Esophagus squamous epithelium (tissue), 5 donors: ENCODE measurements at regions of chr3 and their contacts with region 1.

Region 1: DNA sequence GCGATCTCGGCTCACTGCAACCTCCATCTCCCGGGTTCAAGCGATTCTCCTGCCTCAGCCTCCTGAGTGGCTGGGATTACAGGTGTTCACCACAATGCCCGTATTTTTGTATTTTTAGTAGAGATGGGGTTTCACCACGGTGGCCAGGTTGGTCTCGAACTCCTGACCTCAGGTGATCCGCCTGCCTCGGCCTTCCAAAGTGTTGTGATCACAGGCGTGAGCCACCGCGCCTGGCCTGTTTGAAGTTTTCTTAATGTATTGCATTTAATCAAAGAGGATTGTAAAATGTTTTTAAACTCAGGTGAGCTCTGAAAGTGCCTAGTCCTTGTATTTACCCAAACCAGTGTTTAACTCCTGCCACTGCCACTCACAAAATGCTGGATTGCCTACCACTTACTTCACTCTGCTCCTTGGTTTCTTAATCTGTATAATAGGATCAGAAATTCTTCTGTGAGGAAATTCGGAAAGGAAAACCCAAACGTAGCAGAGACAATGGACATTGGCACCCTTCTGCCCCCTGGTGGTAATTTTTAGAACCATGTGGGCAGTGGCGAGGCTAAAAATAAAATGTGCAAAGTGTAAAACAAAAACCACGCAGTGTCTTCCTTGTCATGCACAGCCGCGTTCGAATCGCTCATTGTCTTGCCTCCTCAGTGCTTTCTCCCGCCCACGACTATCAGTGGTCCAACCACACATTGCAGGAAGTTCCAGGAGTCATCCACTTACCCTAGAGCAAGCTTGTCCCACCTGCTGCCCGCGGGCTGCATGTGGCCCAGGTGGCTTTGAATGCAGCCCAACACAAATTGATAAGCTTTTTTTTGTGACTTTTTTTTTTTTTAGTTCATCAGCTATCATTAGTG is 27.3 kb downstream of the CEP19 start:
- DNase-seq: no peak
- H3K4me3 ChIP-seq: peak overlapping the region in 1 of 4 donors; percentile 18
- H3K27ac ChIP-seq: peak overlapping the region in 2 of 4 donors; percentile 5 to 46
- H3K4me1 ChIP-seq: peaks cover 0 to 15% (median 12%) of the 10 kb centered on the region in 3 donors
- H3K27me3 ChIP-seq: no peaks in the 10 kb centered on the region
- CTCF ChIP-seq: peak; percentile 88 to 96 (median 92)
- POLR2A ChIP-seq: no peak

Region 2: GRCh38 chr3:196568246-196569002 is 116.4 kb before region 1 on chr3 and contains the starts of genes FBXO45 and WDR53:
- intact Hi-C with region 1: no loop called
- DNase-seq: peak; percentile 68
- H3K4me3 ChIP-seq: peak within 1 kb of the TSS; percentile 80 to 99 (median 88)
- H3K27ac ChIP-seq: peak within 1 kb of the TSS; percentile 93 to 96 (median 94)
- H3K4me1 ChIP-seq: peaks cover 8 to 63% (median 17%) of the 10 kb centered on the region in 3 donors
- H3K27me3 ChIP-seq: no peaks in the 10 kb centered on the region
- CTCF ChIP-seq: peak in 2 of 6 experiments; percentile 2 to 26
- POLR2A ChIP-seq: peak in 3 of 4 donors; percentile 51 to 82 (median 57)
- total RNA-seq, gene FBXO45: 6.6 to 19.9 (median 12.9) TPM
- total RNA-seq, gene WDR53: 2.5 to 12.6 (median 5.5) TPM

Region 3: DNA sequence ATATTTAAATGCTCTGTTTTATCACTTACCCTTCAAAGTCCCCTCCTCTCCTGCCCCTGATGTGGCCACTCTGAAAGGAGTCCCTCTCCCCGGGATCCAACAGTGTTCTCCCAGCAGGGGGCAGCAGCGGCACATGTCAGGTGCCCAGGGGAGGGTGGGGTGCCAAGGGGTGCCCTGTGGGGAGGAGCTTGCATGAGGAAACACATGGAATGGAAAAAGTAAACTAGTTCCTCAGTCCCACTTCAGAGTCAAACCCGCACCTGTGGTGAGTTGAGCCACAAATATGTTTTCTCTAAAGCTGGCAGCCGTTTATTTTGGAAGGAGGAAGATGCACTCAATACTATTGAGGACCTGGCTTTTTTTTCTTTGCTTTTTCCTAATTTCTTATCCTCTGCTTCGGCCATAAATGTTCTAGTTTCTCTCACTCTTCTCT is 75.4 kb before region 1 on chr3:
- intact Hi-C with region 1: loop called (anchors 5 kb)
- DNase-seq: peak; percentile 70
- H3K4me3 ChIP-seq: no peak overlapping the region
- H3K27ac ChIP-seq: peak overlapping the region in 3 of 4 donors; percentile 16 to 79 (median 40)
- H3K4me1 ChIP-seq: peaks cover 0 to 37% (median 24%) of the 10 kb centered on the region in 3 donors
- H3K27me3 ChIP-seq: peaks cover 0 to 10% (median 0%) of the 10 kb centered on the region in 4 donors
- CTCF ChIP-seq: peak; percentile 88 to 94 (median 91)
- POLR2A ChIP-seq: no peak

Region 4: GRCh38 chr3:196774191-196774820 is 89.5 kb after region 1 on chr3:
- intact Hi-C with region 1: no loop called
- DNase-seq: no peak
- H3K4me3 ChIP-seq: no peak overlapping the region
- H3K27ac ChIP-seq: no peak overlapping the region
- H3K4me1 ChIP-seq: peaks cover 6 to 56% (median 10%) of the 10 kb centered on the region in 3 donors
- H3K27me3 ChIP-seq: no peaks in the 10 kb centered on the region
- CTCF ChIP-seq: no peak
- POLR2A ChIP-seq: no peak

Region 5: GRCh38 chr3:197151569-197151968 is 466.8 kb after region 1 on chr3:
- intact Hi-C with region 1: no loop called
- DNase-seq: no peak
- H3K4me3 ChIP-seq: no peak overlapping the region
- H3K27ac ChIP-seq: no peak overlapping the region
- H3K4me1 ChIP-seq: peaks cover 0 to 10% (median 0%) of the 10 kb centered on the region in 3 donors
- H3K27me3 ChIP-seq: no peaks in the 10 kb centered on the region
- CTCF ChIP-seq: no peak
- POLR2A ChIP-seq: no peak